ENCODE measurements at regions of chr19 and their contacts with region 1.

Region 1: GRCh38 chr19:44903602-44904425 is 1.8 kb upstream of the APOE start:
- DNase-seq: peak; percentile 80 to 89
- H3K4me3 ChIP-seq: no peak overlapping the region
- H3K27ac ChIP-seq: no peak overlapping the region
- H3K4me1 ChIP-seq: peaks cover 21 to 36% (median 28%) of the 10 kb centered on the region in 4 donors
- H3K27me3 ChIP-seq: peaks cover 2 to 46% (median 27%) of the 10 kb centered on the region in 3 donors
- CTCF ChIP-seq: peak in 6 of 7 experiments; percentile 76 to 99 (median 95)
- EP300 ChIP-seq: no peak
- POLR2A ChIP-seq: no peak

Region 2: DNA sequence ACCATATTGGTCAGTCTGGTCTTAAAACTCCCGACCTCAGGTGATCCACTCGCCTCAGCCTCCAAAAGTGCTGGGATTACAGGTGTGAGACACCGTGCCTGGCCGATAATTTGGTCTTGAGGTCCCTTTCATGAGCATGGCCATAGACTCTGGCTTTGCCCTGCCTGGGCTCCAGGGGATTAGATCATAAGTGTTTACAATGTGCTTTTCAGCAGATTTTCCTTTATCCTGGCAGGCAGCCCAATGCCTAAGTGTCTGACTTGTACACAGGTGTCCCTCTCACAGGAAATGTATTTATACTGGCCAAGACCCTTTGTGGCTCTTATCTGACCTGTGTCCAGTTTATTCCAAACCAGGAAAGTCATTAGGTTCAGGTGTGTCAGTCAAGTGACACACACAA is 79.1 kb before region 1 on chr19:
- intact Hi-C with region 1: no loop called
- DNase-seq: peak in 1 of 2 donors; percentile 65
- H3K4me3 ChIP-seq: no peak overlapping the region
- H3K27ac ChIP-seq: no peak overlapping the region
- H3K4me1 ChIP-seq: peaks cover 0 to 12% (median 10%) of the 10 kb centered on the region in 4 donors
- H3K27me3 ChIP-seq: peaks cover 0 to 8% (median 0%) of the 10 kb centered on the region in 3 donors
- CTCF ChIP-seq: no peak
- EP300 ChIP-seq: no peak
- POLR2A ChIP-seq: no peak

Region 3: GRCh38 chr19:44947041-44947581 is 43.3 kb after region 1 on chr19:
- intact Hi-C with region 1: loop called (anchors 5 kb)
- DNase-seq: no peak
- H3K4me3 ChIP-seq: no peak overlapping the region
- H3K27ac ChIP-seq: no peak overlapping the region
- H3K4me1 ChIP-seq: peaks cover 8 to 12% (median 10%) of the 10 kb centered on the region in 4 donors
- H3K27me3 ChIP-seq: no peaks in the 10 kb centered on the region
- CTCF ChIP-seq: no peak
- EP300 ChIP-seq: no peak
- POLR2A ChIP-seq: no peak

Measured in stomach (tissue), 19 donors.